Prostate gland (tissue), 2 donors: ENCODE measurements at regions of chr9 and their contacts with region 1.

Region 1: DNA sequence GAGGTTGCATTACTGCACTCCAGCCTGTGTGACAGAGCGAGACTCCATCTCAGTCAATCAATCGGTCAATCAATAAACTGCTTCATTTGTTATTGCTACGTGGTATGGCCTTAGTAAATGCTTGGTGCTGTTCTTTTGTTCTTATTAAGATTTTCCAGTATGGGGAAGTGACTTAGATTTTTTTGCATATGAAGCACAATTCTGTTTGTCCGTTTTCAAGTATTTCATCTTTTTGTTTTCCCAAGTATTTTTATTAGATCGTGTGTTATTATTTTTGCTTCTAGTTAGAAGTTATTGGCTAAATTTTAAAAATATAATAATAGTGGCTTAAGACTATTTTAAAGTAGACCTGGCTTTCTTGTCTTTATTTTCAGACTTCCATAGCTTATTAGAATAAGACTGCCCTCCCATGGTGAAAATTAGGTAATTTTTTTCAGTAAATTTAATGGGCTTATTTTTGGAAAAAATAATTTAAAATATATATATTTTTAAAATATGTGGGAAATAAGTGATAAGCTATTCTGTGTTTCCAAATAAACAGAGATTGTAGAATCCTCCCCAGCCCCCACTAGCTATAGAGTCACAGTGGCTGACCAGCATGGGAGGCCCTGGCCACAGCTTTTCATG is 14.7 kb upstream of the OMD start:
- DNase-seq: no peak
- H3K4me3 ChIP-seq: no peak overlapping the region
- H3K27ac ChIP-seq: no peak overlapping the region
- H3K4me1 ChIP-seq: no peaks in the 10 kb centered on the region
- H3K27me3 ChIP-seq: no peaks in the 10 kb centered on the region
- CTCF ChIP-seq: peak in 3 of 4 experiments; percentile 22 to 44 (median 26)
- POLR2A ChIP-seq: no peak

Region 2: DNA sequence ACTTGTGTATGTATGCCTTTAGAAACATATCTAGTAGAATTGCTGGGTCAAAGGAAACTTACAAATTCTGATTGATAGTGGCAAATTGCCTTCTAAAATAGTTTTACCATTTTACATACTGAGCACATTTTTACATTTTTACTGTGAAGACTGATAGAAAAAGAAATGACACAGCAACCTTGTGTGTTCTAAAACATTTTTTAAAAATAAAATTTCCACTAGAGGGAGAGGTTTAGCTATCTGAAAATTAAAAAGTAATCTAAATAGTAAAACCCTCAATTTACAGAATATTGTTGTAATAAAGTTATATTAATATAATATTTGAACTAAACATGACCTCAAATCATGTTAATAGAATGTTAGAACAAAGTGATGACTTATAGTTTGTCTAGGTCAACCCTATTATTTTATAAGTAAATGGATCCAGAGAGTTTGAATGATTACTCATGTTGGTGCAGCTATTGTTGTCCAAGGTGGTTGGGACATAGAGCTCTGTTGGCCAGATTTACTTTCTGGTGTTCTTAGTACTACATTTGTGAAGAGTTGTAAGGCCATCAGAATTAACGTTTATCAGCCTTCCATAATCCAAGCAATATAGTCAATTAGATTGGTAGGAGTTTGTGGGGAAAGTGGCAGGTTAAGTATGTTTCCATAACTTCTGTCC is 96.1 kb before region 1 on chr9:
- intact Hi-C with region 1: loop called (anchors 5 kb)
- DNase-seq: no peak
- H3K4me3 ChIP-seq: no peak overlapping the region
- H3K27ac ChIP-seq: no peak overlapping the region
- H3K4me1 ChIP-seq: no peaks in the 10 kb centered on the region
- H3K27me3 ChIP-seq: no peaks in the 10 kb centered on the region
- CTCF ChIP-seq: peak in 3 of 4 experiments; percentile 10 to 36 (median 20)
- POLR2A ChIP-seq: no peak

Region 3: GRCh38 chr9:92359394-92359995 is 79.5 kb before region 1 on chr9:
- intact Hi-C with region 1: no loop called
- DNase-seq: no peak
- H3K4me3 ChIP-seq: no peak overlapping the region
- H3K27ac ChIP-seq: no peak overlapping the region
- H3K4me1 ChIP-seq: no peaks in the 10 kb centered on the region
- H3K27me3 ChIP-seq: no peaks in the 10 kb centered on the region
- CTCF ChIP-seq: no peak
- POLR2A ChIP-seq: no peak